HepG2 (cell line): ENCODE measurements at regions of chr2 and their contacts with region 1.

Region 1: DNA sequence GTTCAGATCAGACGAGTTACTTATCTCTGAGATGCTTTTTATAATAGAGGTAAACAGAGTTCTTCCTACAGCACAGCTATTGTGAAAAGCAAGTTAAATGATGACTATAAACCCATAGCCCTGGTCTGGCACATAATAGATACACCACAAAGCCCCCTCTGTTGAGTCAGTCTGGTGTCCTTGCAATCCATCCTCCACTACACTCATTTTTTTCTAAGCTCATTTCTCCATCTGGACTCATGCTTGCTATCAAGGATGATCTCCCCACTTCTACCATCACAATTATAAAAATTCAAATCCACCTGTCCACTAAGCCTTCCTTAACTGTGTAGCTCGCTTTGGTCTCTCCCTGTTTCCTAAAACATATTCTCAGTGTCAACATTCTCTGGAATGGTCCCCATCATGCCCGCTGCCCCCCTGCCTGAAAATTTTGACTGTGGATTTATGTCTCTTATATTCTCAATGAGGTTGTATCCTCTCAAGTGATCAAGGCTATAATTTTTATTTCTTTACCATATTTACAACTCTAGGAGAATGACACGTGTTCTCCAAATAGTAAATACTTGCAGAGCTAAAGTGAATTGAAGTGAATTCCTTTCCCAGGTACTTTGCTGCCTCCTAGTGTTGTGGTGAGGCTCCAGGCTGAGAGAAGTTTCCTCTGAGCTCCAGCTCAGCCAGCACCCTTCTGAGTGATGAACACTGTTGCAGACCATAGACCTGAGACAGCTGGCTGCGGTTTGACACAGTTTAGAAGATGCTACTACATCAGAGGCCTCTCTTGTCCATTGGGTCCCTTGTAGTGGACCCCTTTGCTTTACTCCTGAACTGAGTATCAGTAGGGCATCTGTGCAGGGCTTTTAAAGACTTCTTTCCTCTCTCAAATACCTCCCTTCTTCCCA is 108.7 kb downstream of the DPP10 start:
- DNase-seq: peak; percentile 74
- ATAC-seq: peak; percentile 88
- H3K4me3 ChIP-seq: no peak overlapping the region
- H3K27ac ChIP-seq: peak overlapping the region; percentile 15
- H3K4me1 ChIP-seq: peaks cover 36% of the 10 kb centered on the region
- H3K27me3 ChIP-seq: no peaks in the 10 kb centered on the region
- CTCF ChIP-seq: peak; percentile 95
- EP300 ChIP-seq: peak in 1 of 2 experiments; percentile 15; a peak in 1 of 4 replicates
- POLR2A ChIP-seq: no peak
- RAD21 ChIP-seq: peak; percentile 91

Region 2: GRCh38 chr2:113889471-113890252 is 661.5 kb before region 1 on chr2 and contains the start of gene ACTR3:
- CTCF ChIA-PET with region 1: no interaction called
- POLR2A ChIA-PET with region 1: no interaction called
- in situ Hi-C with region 1: no loop called
- intact Hi-C with region 1: loop called (anchors 5 kb)
- DNase-seq: peak; percentile 98
- ATAC-seq: peak; percentile 91
- H3K4me3 ChIP-seq: peak within 1 kb of the TSS; percentile 92 to 96 (median 95)
- H3K27ac ChIP-seq: peak within 1 kb of the TSS; percentile 94
- H3K4me1 ChIP-seq: peaks cover 62% of the 10 kb centered on the region
- H3K27me3 ChIP-seq: no peaks in the 10 kb centered on the region; a peak in 1 of 5 replicates
- CTCF ChIP-seq: peak; percentile 36; the same call in 1 of the 2 replicates
- EP300 ChIP-seq: 0 out of 4 replicates have a peak, but pooled peaks of 1 of the 2 experiments have one; percentile 40
- POLR2A ChIP-seq: peak; percentile 93 to 99
- RAD21 ChIP-seq: peak; percentile 51
- total RNA-seq, gene ACTR3: 225 and 321 TPM in 2 replicates

Region 3: DNA sequence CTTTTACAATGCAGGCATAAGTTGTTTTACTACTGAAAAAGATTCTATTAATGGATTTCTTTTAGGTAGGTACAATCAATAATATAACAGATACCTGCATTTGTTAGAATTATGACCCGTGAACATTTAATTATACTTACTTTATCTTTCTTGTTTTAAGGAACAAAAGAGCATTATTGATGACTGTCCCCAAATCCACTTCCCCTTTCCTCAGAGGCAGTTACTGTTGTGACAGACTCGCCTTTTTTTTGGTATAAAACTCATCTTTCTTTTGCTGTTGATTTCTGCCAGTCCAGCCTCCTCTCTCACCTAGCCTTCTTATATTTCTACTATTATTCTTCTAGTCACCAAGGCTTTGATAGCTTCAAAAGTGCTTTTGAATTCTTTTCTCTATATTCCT is 649.2 kb before region 1 on chr2:
- CTCF ChIA-PET with region 1: no interaction called
- POLR2A ChIA-PET with region 1: no interaction called
- in situ Hi-C with region 1: no loop called
- intact Hi-C with region 1: loop called (anchors 2 kb)
- DNase-seq: no peak
- ATAC-seq: no peak
- H3K4me3 ChIP-seq: no peak overlapping the region
- H3K27ac ChIP-seq: no peak overlapping the region
- H3K4me1 ChIP-seq: peaks cover 48% of the 10 kb centered on the region
- H3K27me3 ChIP-seq: no peaks in the 10 kb centered on the region
- CTCF ChIP-seq: no peak
- EP300 ChIP-seq: no peak
- POLR2A ChIP-seq: no peak
- RAD21 ChIP-seq: no peak

Region 4: GRCh38 chr2:113965644-113966043 is 585.5 kb before region 1 on chr2:
- CTCF ChIA-PET with region 1: interaction called, 17 read pairs
- POLR2A ChIA-PET with region 1: interaction called, 9 read pairs
- in situ Hi-C with region 1: no loop called
- intact Hi-C with region 1: loop called (anchors 1 kb)
- DNase-seq: peak; percentile 94
- ATAC-seq: peak; percentile 94
- H3K4me3 ChIP-seq: no peak overlapping the region
- H3K27ac ChIP-seq: peak overlapping the region; percentile 79
- H3K4me1 ChIP-seq: peaks cover 43% of the 10 kb centered on the region
- H3K27me3 ChIP-seq: no peaks in the 10 kb centered on the region
- CTCF ChIP-seq: peak; percentile 97
- EP300 ChIP-seq: peak in 1 of 2 experiments; percentile 48; a peak in 1 of 4 replicates
- POLR2A ChIP-seq: no peak
- RAD21 ChIP-seq: peak; percentile 87

Region 5: DNA sequence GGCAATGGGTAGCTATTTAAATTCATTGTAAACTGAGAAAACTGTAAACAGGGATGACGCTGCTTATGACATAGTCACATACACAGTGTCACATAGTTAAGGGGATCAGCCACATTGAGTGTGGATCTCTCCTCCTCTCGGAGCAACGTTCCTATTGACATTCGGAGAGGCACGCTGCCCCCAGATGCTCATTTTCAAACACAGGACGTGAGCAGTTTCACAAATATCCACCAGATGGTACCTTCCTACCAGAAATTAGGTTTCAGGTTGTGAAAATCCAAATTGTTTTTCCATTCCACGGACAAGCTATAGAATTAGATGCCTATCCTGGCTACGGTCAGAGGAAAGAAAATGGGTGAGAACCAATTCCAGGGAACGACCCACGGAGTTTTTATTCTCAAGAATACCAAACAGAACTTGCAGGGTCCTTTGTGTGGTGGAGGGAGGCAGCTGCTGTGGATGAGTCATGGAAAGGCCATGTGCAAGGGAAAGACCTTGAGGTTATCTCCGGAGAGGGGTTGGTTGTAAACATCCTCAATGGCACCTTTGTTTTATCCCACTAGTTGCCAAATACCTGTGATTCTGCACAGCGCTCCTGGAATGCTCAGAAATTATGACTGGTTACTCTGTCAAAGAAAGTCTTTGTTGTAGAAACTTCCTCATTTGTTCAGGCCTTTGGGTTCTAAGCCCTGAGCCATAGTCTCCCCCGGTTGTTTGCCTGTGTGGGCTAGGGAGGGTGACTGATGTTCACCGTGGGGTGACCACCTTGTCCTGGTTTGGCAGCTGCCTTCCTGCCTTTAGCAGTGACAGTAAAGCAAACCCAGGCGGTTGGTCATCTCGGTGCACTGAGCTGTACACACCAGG is 573.3 kb before region 1 on chr2:
- CTCF ChIA-PET with region 1: interaction called, 8 read pairs
- POLR2A ChIA-PET with region 1: interaction called, 10 read pairs
- in situ Hi-C with region 1: loop called (anchors 5 kb)
- intact Hi-C with region 1: loop called (anchors 1 kb)
- DNase-seq: peak; percentile 100
- ATAC-seq: peak; percentile 92
- H3K4me3 ChIP-seq: peak overlapping the region in 1 of 3 experiments; percentile 41; a peak in 2 of 6 replicates
- H3K27ac ChIP-seq: peak overlapping the region; percentile 97
- H3K4me1 ChIP-seq: peaks cover 89% of the 10 kb centered on the region
- H3K27me3 ChIP-seq: no peaks in the 10 kb centered on the region
- CTCF ChIP-seq: peak; percentile 92
- EP300 ChIP-seq: peak; percentile 98 to 100
- POLR2A ChIP-seq: peak; percentile 76 to 95
- RAD21 ChIP-seq: peak; percentile 86

Region 6: GRCh38 chr2:114076961-114077360 is 474.2 kb before region 1 on chr2:
- CTCF ChIA-PET with region 1: no interaction called
- POLR2A ChIA-PET with region 1: no interaction called
- in situ Hi-C with region 1: no loop called
- intact Hi-C with region 1: loop called (anchors 5 kb)
- DNase-seq: peak; percentile 73
- ATAC-seq: peak; percentile 81
- H3K4me3 ChIP-seq: 0 out of 6 replicates have a peak overlapping the region, but pooled peaks of 1 of the 3 experiments have one; percentile 3
- H3K27ac ChIP-seq: no peak overlapping the region
- H3K4me1 ChIP-seq: peaks cover 30% of the 10 kb centered on the region
- H3K27me3 ChIP-seq: peaks cover 0 to 7% of the 10 kb centered on the region in 2 experiments; a peak in 1 of 5 replicates
- CTCF ChIP-seq: no peak
- EP300 ChIP-seq: no peak
- POLR2A ChIP-seq: no peak
- RAD21 ChIP-seq: no peak

Region 7: GRCh38 chr2:114405247-114406116 is 145.7 kb before region 1 on chr2:
- CTCF ChIA-PET with region 1: no interaction called
- POLR2A ChIA-PET with region 1: no interaction called
- in situ Hi-C with region 1: no loop called
- intact Hi-C with region 1: no loop called
- DNase-seq: no peak
- ATAC-seq: no peak
- H3K4me3 ChIP-seq: no peak overlapping the region
- H3K27ac ChIP-seq: no peak overlapping the region
- H3K4me1 ChIP-seq: no peaks in the 10 kb centered on the region
- H3K27me3 ChIP-seq: no peaks in the 10 kb centered on the region; a peak in 1 of 5 replicates
- CTCF ChIP-seq: no peak
- EP300 ChIP-seq: no peak
- POLR2A ChIP-seq: no peak
- RAD21 ChIP-seq: no peak

Region 8: GRCh38 chr2:114450639-114451038 is 100.5 kb before region 1 on chr2:
- CTCF ChIA-PET with region 1: no interaction called
- POLR2A ChIA-PET with region 1: no interaction called
- in situ Hi-C with region 1: no loop called
- intact Hi-C with region 1: no loop called
- DNase-seq: no peak
- ATAC-seq: no peak
- H3K4me3 ChIP-seq: no peak overlapping the region
- H3K27ac ChIP-seq: no peak overlapping the region
- H3K4me1 ChIP-seq: no peaks in the 10 kb centered on the region
- H3K27me3 ChIP-seq: no peaks in the 10 kb centered on the region
- CTCF ChIP-seq: no peak
- EP300 ChIP-seq: no peak
- POLR2A ChIP-seq: no peak
- RAD21 ChIP-seq: no peak

Region 9: GRCh38 chr2:114488841-114489530 is 62.2 kb before region 1 on chr2:
- CTCF ChIA-PET with region 1: no interaction called
- POLR2A ChIA-PET with region 1: no interaction called
- in situ Hi-C with region 1: no loop called
- intact Hi-C with region 1: loop called (anchors 2 kb)
- DNase-seq: no peak
- ATAC-seq: no peak
- H3K4me3 ChIP-seq: no peak overlapping the region
- H3K27ac ChIP-seq: no peak overlapping the region
- H3K4me1 ChIP-seq: no peaks in the 10 kb centered on the region
- H3K27me3 ChIP-seq: no peaks in the 10 kb centered on the region
- CTCF ChIP-seq: no peak
- EP300 ChIP-seq: no peak
- POLR2A ChIP-seq: no peak
- RAD21 ChIP-seq: no peak